Endothelial cell of umbilical vein (primary cell): ENCODE measurements at regions of chr2 and their contacts with region 1.

Region 1: GRCh38 chr2:194700726-194701125 is 956.3 kb upstream of the SLC39A10 start:
- DNase-seq: peak; percentile 52
- H3K4me3 ChIP-seq: no peak overlapping the region
- H3K27ac ChIP-seq: peak overlapping the region; percentile 55
- H3K4me1 ChIP-seq: peaks cover 46% of the 10 kb centered on the region
- H3K27me3 ChIP-seq: no peaks in the 10 kb centered on the region
- CTCF ChIP-seq: no peak
- POLR2A ChIP-seq: no peak

Region 2: DNA sequence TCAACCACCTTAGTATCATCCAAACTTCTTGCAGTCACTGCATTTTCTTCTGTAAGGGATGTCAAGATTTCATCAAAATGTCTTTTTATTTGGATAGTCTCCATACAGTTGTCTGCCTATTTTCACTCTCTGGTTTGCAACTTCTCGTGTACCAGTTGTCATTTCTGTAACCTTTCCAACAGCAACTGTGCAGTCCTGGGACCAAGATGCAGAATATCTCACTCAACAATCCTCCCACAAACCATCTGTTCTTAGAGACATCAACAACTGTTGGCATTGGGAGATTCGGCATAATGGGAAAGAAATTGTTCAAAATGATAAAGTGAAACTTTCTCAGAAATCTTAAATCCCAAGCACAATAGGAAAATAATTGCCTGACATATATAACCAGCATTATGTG is 22.7 kb after region 1 on chr2:
- CTCF ChIA-PET with region 1: no interaction called
- POLR2A ChIA-PET with region 1: no interaction called
- dilution Hi-C with region 1: no loop called
- intact Hi-C with region 1: no loop called
- DNase-seq: no peak
- H3K4me3 ChIP-seq: no peak overlapping the region
- H3K27ac ChIP-seq: no peak overlapping the region
- H3K4me1 ChIP-seq: no peaks in the 10 kb centered on the region
- H3K27me3 ChIP-seq: no peaks in the 10 kb centered on the region
- CTCF ChIP-seq: no peak
- POLR2A ChIP-seq: no peak

Region 3: DNA sequence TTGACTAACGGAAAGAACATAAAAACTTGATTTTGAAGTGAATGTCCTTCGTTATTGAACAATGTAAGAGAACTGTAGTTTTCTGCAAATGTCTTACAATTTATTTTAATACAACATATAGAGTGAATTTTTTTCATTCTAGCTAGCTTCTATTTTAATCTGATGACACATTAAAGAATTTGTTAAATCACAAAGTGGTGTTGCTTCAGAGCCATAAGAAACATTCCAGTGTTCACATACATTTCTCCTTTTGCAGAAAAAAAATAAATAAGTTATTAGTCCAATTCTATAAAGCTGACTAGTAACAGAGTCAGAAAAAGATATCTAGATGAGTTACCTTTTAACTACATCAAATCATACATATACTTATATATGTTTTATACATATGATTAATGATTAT is 42.0 kb after region 1 on chr2:
- CTCF ChIA-PET with region 1: no interaction called
- POLR2A ChIA-PET with region 1: no interaction called
- dilution Hi-C with region 1: no loop called
- intact Hi-C with region 1: loop called (anchors 5 kb)
- DNase-seq: no peak
- H3K4me3 ChIP-seq: no peak overlapping the region
- H3K27ac ChIP-seq: no peak overlapping the region
- H3K4me1 ChIP-seq: no peaks in the 10 kb centered on the region
- H3K27me3 ChIP-seq: no peaks in the 10 kb centered on the region
- CTCF ChIP-seq: no peak
- POLR2A ChIP-seq: no peak